ENCODE measurements at regions of chr2 and their contacts with region 1.

Region 1: GRCh38 chr2:167212014-167212648 is 323.9 kb downstream of the XIRP2 start:
- DNase-seq: peak in 1 of 2 donors; percentile 48
- ATAC-seq: peak in 7 of 8 donors; percentile 46 to 79 (median 62)
- H3K4me3 ChIP-seq: no peak overlapping the region
- H3K27ac ChIP-seq: peak overlapping the region in 3 of 10 donors; percentile 15 to 35 (median 30)
- H3K4me1 ChIP-seq: peaks cover 0 to 32% (median 11%) of the 10 kb centered on the region in 9 donors
- H3K27me3 ChIP-seq: no peaks in the 10 kb centered on the region
- CTCF ChIP-seq: peak; percentile 69 to 79 (median 74)

Region 2: GRCh38 chr2:166539340-166540162 is 672.6 kb before region 1 on chr2:
- intact Hi-C with region 1: loop called in 2 of 10 experiments (anchors 5 kb)
- DNase-seq: peak in 1 of 2 donors; percentile 14
- ATAC-seq: peak; percentile 63 to 86 (median 73)
- H3K4me3 ChIP-seq: no peak overlapping the region
- H3K27ac ChIP-seq: no peak overlapping the region
- H3K4me1 ChIP-seq: peaks cover 0 to 4% (median 0%) of the 10 kb centered on the region in 9 donors
- H3K27me3 ChIP-seq: no peaks in the 10 kb centered on the region
- CTCF ChIP-seq: peak; percentile 51 to 86 (median 76)

Region 3: DNA sequence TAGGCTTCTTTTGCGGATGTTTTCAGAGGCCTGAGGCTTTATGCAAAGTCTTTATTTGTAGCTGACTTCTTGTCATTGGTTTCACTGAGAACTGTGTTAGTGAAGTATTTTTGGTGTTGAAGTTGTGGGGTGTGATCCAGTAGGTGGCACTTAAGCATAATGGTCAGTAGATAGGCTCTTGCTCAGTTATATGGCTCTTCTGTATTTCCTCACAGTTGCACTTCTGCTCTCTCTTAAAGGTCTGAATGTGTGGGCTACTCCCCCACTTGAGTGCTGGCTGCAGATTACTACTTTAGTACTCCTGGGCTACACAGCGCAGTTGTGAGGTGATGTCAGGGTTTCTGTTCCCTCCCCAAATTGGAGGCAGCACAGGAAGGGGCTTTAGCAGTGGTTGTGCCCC is 584.2 kb before region 1 on chr2:
- intact Hi-C with region 1: loop called in 1 of 10 experiments (anchors 10 kb)
- DNase-seq: no peak
- ATAC-seq: peak in 5 of 8 donors; percentile 67 to 84 (median 81)
- H3K4me3 ChIP-seq: no peak overlapping the region
- H3K27ac ChIP-seq: no peak overlapping the region
- H3K4me1 ChIP-seq: peaks cover 0 to 8% (median 0%) of the 10 kb centered on the region in 9 donors
- H3K27me3 ChIP-seq: no peaks in the 10 kb centered on the region
- CTCF ChIP-seq: peak in 4 of 9 donors; percentile 20 to 44 (median 35)

Region 4: DNA sequence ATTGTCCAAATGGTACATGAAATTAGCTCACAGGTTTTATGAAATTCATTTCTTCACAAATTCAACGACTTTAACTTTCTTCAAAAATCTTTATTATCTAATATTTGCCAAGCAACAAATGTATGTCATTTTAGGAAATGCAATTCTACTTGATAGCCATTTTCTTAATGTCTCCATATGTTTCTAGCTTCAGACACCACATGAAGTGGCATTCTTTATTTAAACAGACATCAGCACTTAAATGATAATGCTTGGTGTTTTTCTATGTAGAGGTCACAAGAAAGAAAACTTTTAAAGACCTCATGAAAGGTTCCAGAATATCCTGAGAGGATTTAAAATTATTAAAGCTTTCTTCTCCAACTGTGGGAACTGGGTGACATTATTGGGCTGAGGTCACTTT is 368.0 kb before region 1 on chr2:
- intact Hi-C with region 1: no loop called
- DNase-seq: no peak
- ATAC-seq: no peak
- H3K4me3 ChIP-seq: no peak overlapping the region
- H3K27ac ChIP-seq: no peak overlapping the region
- H3K4me1 ChIP-seq: no peaks in the 10 kb centered on the region
- H3K27me3 ChIP-seq: no peaks in the 10 kb centered on the region
- CTCF ChIP-seq: no peak

Region 5: GRCh38 chr2:166900700-166901099 is 311.4 kb before region 1 on chr2:
- intact Hi-C with region 1: loop called in 1 of 10 experiments (anchors 10 kb)
- DNase-seq: no peak
- ATAC-seq: no peak
- H3K4me3 ChIP-seq: no peak overlapping the region
- H3K27ac ChIP-seq: no peak overlapping the region
- H3K4me1 ChIP-seq: no peaks in the 10 kb centered on the region
- H3K27me3 ChIP-seq: no peaks in the 10 kb centered on the region
- CTCF ChIP-seq: peak in 4 of 9 donors; percentile 10 to 32 (median 27)

Region 6: GRCh38 chr2:167069855-167070254 is 142.3 kb before region 1 on chr2:
- intact Hi-C with region 1: no loop called
- DNase-seq: no peak
- ATAC-seq: no peak
- H3K4me3 ChIP-seq: no peak overlapping the region
- H3K27ac ChIP-seq: no peak overlapping the region
- H3K4me1 ChIP-seq: no peaks in the 10 kb centered on the region
- H3K27me3 ChIP-seq: no peaks in the 10 kb centered on the region
- CTCF ChIP-seq: no peak

Region 7: GRCh38 chr2:167127135-167127534 is 85.0 kb before region 1 on chr2:
- intact Hi-C with region 1: loop called in 3 of 10 experiments (anchors 5 kb)
- DNase-seq: no peak
- ATAC-seq: peak in 2 of 8 donors; percentile 41 to 60
- H3K4me3 ChIP-seq: no peak overlapping the region
- H3K27ac ChIP-seq: no peak overlapping the region
- H3K4me1 ChIP-seq: no peaks in the 10 kb centered on the region
- H3K27me3 ChIP-seq: no peaks in the 10 kb centered on the region
- CTCF ChIP-seq: peak in 7 of 9 donors; percentile 13 to 41 (median 33)